ENCODE measurements at regions of chr17 and their contacts with region 1.

Region 1: GRCh38 chr17:56715613-56716357 is 117.9 kb downstream of the C17orf67 start:
- DNase-seq: peak; percentile 40 to 68 (median 62)
- H3K4me3 ChIP-seq: no peak overlapping the region
- H3K27ac ChIP-seq: no peak overlapping the region
- H3K4me1 ChIP-seq: no peaks in the 10 kb centered on the region
- H3K27me3 ChIP-seq: no peaks in the 10 kb centered on the region
- CTCF ChIP-seq: peak; percentile 22 to 43 (median 24)
- EP300 ChIP-seq: no peak
- POLR2A ChIP-seq: no peak

Region 2: GRCh38 chr17:55177159-55177854 is 1538.5 kb before region 1 on chr17:
- intact Hi-C with region 1: loop called in 1 of 4 experiments (anchors 5 kb)
- DNase-seq: no peak
- H3K4me3 ChIP-seq: no peak overlapping the region
- H3K27ac ChIP-seq: no peak overlapping the region
- H3K4me1 ChIP-seq: no peaks in the 10 kb centered on the region
- H3K27me3 ChIP-seq: no peaks in the 10 kb centered on the region
- CTCF ChIP-seq: no peak
- EP300 ChIP-seq: no peak
- POLR2A ChIP-seq: no peak

Region 3: DNA sequence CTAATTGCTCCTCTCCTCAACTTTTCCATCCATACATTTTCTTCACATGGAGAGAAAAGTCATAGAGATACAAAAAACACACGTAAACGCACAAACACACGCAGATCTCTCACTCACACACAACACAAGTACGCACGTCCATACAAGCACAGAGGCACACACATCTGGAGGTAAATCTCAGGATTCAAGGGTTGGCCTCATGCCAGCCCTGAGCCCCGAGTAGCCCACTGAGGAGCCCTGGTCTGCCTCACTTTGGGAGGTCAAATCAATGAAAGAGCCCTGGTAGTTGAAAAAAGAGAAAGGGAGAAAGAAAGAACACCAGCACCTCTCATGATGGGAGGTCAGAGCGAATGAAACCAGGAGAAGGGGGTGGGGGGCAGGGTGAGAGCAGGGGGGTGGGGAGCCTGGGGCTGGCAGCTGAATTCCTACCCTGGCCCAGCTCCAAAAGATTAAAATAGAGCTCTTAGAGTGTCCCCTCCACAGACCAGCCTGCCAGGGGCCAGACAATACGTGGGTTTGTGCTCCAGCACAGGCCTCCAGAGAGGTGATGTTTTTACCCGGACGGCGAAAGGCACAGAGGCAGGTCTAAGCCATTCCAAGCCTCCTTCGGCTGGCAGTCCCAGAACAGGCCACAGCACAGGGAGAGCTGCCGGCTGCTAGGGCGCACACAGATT is 194.5 kb before region 1 on chr17:
- intact Hi-C with region 1: no loop called
- DNase-seq: no peak
- H3K4me3 ChIP-seq: no peak overlapping the region
- H3K27ac ChIP-seq: no peak overlapping the region
- H3K4me1 ChIP-seq: no peaks in the 10 kb centered on the region
- H3K27me3 ChIP-seq: no peaks in the 10 kb centered on the region
- CTCF ChIP-seq: no peak
- EP300 ChIP-seq: no peak
- POLR2A ChIP-seq: no peak

Region 4: GRCh38 chr17:56581635-56582627 is 133.9 kb before region 1 on chr17:
- intact Hi-C with region 1: loop called in 1 of 4 experiments (anchors 10 kb)
- DNase-seq: no peak
- H3K4me3 ChIP-seq: no peak overlapping the region
- H3K27ac ChIP-seq: no peak overlapping the region
- H3K4me1 ChIP-seq: no peaks in the 10 kb centered on the region
- H3K27me3 ChIP-seq: no peaks in the 10 kb centered on the region
- CTCF ChIP-seq: no peak
- EP300 ChIP-seq: no peak
- POLR2A ChIP-seq: no peak

Region 5: GRCh38 chr17:56592487-56593085 is 123.2 kb before region 1 on chr17:
- intact Hi-C with region 1: loop called in 3 of 4 experiments (anchors 5 to 10 kb)
- DNase-seq: peak; percentile 22 to 76 (median 55)
- H3K4me3 ChIP-seq: peak overlapping the region; percentile 33
- H3K27ac ChIP-seq: no peak overlapping the region
- H3K4me1 ChIP-seq: peaks cover 8% of the 10 kb centered on the region
- H3K27me3 ChIP-seq: no peaks in the 10 kb centered on the region
- CTCF ChIP-seq: peak; percentile 54 to 81 (median 77)
- EP300 ChIP-seq: no peak
- POLR2A ChIP-seq: no peak

Region 6: DNA sequence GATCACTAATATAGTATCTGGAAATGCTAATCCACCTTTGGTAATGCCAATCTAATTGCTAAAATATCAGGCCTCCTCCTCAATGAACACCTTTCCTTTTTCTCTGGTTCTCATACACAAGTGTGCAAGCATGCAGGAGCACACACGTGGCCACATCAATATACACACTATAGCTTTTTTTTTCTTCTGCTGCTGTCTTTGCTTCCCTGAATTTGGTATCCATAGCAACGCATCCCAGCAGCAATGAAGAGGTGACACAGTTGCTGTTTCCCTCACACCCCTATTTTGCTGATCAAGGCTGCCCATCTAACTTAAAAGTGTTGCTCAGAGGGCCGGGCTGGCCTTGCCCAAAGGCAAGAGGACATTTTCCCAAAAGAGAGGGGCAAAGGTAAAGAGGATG is 106.8 kb before region 1 on chr17:
- intact Hi-C with region 1: no loop called
- DNase-seq: no peak
- H3K4me3 ChIP-seq: no peak overlapping the region
- H3K27ac ChIP-seq: no peak overlapping the region
- H3K4me1 ChIP-seq: no peaks in the 10 kb centered on the region
- H3K27me3 ChIP-seq: no peaks in the 10 kb centered on the region
- CTCF ChIP-seq: no peak
- EP300 ChIP-seq: no peak
- POLR2A ChIP-seq: no peak

Region 7: GRCh38 chr17:56690486-56691291 is 25.1 kb before region 1 on chr17:
- intact Hi-C with region 1: no loop called
- DNase-seq: no peak
- H3K4me3 ChIP-seq: no peak overlapping the region
- H3K27ac ChIP-seq: no peak overlapping the region
- H3K4me1 ChIP-seq: no peaks in the 10 kb centered on the region
- H3K27me3 ChIP-seq: no peaks in the 10 kb centered on the region
- CTCF ChIP-seq: no peak
- EP300 ChIP-seq: no peak
- POLR2A ChIP-seq: no peak